Activated CD4-positive, alpha-beta memory T cell treated with anti-CD3 and anti-CD28 coated beads, Interleukin-2, amount 10 ng/mL, durations not matched to agents 7 days and 5 days (primary cell): ENCODE measurements at regions of chr10 and their contacts with region 1.

Region 1: GRCh38 chr10:73096449-73097304 is at the start of gene P4HA1:
- DNase-seq: peak; percentile 98
- H3K4me3 Mint-ChIP-seq: peak within 1 kb of the TSS; percentile 92
- H3K27ac Mint-ChIP-seq: peak within 1 kb of the TSS; percentile 88
- H3K4me1 Mint-ChIP-seq: peaks cover 29% of the 10 kb centered on the region
- H3K27me3 Mint-ChIP-seq: no peaks in the 10 kb centered on the region
- total RNA-seq, gene P4HA1: 48.1 to 49.2 TPM

Region 2: DNA sequence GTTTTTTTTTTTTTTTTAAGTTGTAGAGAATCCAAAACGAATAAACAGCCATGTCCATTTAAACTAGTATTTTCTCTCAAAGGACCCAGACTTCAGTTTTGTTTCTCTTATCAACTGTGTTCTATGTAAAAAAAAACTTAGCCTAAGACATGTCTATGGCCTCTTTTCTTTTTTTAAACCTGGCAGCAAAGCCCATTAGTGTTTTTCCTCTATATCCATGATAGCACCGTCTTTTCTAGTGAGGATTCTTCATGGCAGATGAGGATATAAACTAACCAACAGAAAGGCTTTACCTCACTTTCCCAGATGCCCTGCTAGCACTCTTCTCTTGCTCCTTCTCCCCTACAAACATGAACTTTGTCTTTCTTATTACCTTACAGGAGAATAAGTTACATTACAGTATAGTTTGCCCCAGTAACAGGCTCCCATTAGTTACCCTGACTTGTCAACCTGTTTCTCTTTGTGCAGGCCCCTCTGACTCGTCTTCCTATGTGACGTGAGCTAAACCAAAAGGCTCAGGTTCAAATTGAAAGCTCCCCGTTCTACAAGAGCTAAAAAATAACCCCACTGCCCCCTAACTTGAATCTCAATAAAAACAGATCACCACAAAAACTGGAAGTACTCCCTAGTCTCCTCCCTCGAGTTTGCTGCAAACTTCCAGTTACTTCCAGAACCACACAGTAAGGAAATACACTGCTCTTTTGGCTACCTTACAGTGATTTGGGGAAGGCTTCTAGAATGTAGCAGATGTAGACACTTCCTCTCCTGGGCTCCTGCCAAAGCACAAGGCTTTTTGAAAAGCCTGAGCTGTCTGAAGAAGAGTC is 20.1 kb before region 1 on chr10:
- CTCF ChIA-PET with region 1: interaction called, 34 read pairs
- POLR2A ChIA-PET with region 1: interaction called, 5 read pairs
- DNase-seq: no peak
- H3K4me3 Mint-ChIP-seq: no peak overlapping the region
- H3K27ac Mint-ChIP-seq: peak overlapping the region; percentile 79
- H3K4me1 Mint-ChIP-seq: peaks cover 17% of the 10 kb centered on the region
- H3K27me3 Mint-ChIP-seq: no peaks in the 10 kb centered on the region

Region 3: GRCh38 chr10:73136627-73137026 is 40.0 kb after region 1 on chr10:
- CTCF ChIA-PET with region 1: interaction called, 11 read pairs
- POLR2A ChIA-PET with region 1: interaction called, 3 read pairs
- DNase-seq: no peak
- H3K4me3 Mint-ChIP-seq: no peak overlapping the region
- H3K27ac Mint-ChIP-seq: no peak overlapping the region
- H3K4me1 Mint-ChIP-seq: peaks cover 2% of the 10 kb centered on the region
- H3K27me3 Mint-ChIP-seq: no peaks in the 10 kb centered on the region

Region 4: GRCh38 chr10:73167783-73168464 is 71.2 kb after region 1 on chr10 and contains the starts of genes ECD and FAM149B1:
- CTCF ChIA-PET with region 1: interaction called, 18 read pairs
- POLR2A ChIA-PET with region 1: interaction called, 27 read pairs
- DNase-seq: peak; percentile 94
- H3K4me3 Mint-ChIP-seq: peak within 1 kb of the TSS; percentile 100
- H3K27ac Mint-ChIP-seq: peak within 1 kb of the TSS; percentile 98
- H3K4me1 Mint-ChIP-seq: peaks cover 40% of the 10 kb centered on the region
- H3K27me3 Mint-ChIP-seq: no peaks in the 10 kb centered on the region
- total RNA-seq, gene ECD: 27.1 to 28.5 TPM
- total RNA-seq, gene FAM149B1: 15.7 to 17.4 TPM

Region 5: GRCh38 chr10:73252445-73253224 is 156.0 kb after region 1 on chr10 and contains the start of gene MRPS16:
- CTCF ChIA-PET with region 1: interaction called, 3 read pairs
- POLR2A ChIA-PET with region 1: interaction called, 30 read pairs
- DNase-seq: peak; percentile 95
- H3K4me3 Mint-ChIP-seq: peak within 1 kb of the TSS; percentile 99
- H3K27ac Mint-ChIP-seq: peak within 1 kb of the TSS; percentile 95
- H3K4me1 Mint-ChIP-seq: peaks cover 51% of the 10 kb centered on the region
- H3K27me3 Mint-ChIP-seq: no peaks in the 10 kb centered on the region
- total RNA-seq, gene MRPS16: 77.5 to 80.8 TPM